Esophagus muscularis mucosa (tissue), 4 donors: ENCODE measurements at regions of chr7 and their contacts with region 1.

Region 1: DNA sequence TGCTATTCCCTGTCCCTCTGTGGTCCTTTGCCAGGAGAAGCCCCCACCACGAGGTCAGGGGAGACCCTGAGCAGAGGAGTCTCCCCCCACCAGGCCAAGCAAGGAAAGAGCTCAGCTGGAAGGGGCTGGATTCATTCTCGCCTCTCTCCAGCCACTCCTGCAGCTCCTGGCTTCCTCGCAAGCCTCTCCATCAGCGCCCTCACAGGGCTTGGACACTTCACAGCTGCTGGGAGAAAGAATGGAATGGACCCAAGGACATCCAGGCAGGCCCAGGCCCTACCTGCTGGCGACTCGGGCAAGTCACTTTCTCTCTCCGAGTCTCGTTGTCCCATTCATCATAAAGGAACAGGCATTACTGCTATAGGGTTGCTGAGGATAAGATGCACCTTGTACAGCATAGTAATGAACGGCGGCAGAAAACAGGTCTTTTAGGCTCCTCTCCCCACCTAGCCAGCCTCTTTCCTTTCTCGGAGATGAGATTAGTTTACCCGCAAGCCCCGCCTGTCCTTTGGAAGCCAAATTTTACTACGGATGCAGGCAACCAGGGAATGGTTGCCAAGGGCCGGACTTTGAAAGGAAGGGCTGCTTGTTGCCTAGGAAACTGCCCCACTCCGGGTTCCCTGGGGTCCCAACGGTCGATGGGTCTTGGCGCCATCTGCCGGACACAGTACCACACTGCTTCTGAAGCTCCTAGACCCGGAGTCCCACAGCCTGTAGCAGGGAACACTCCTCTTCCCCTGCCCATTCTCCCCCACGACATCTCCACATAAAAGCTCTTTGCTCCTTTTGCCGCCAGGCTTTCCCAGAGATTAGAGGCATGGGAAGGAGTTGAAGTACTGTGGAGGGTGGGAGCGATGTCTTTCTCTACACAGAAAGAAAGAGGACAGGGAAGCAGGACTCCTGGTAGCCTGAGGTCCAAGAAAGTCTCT is 22.3 kb downstream of the IMPDH1 start:
- DNase-seq: no peak
- H3K4me3 ChIP-seq: peak overlapping the region in 1 of 4 donors; percentile 24
- H3K27ac ChIP-seq: no peak overlapping the region
- H3K4me1 ChIP-seq: peaks cover 5 to 13% (median 10%) of the 10 kb centered on the region in 4 donors
- H3K27me3 ChIP-seq: peaks cover 0 to 6% (median 0%) of the 10 kb centered on the region in 4 donors
- CTCF ChIP-seq: peak; percentile 79 to 95 (median 86)
- EP300 ChIP-seq: no peak
- POLR2A ChIP-seq: no peak

Region 2: DNA sequence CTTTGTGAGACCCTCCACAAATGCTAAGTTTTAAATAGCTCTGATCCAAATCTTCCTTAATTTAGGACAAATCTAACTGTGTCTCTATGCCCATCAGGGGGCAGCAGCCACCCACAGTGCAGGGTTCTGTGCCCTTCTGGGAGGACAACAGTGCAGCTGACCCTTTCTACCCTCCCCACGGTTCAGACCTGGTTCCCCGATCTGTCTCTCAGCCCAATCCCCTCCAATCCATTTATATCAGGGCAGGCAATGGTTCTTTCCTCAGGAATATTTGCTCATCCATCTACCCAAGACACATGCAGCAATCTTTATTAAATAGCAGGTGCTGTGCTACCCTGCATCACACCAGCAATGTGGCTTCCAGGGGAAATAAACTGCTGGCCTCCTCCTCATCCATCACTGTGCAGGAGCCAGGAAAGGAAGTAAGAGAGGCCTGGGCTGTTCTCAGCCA is 39.8 kb before region 1 on chr7:
- intact Hi-C with region 1: loop called (anchors 2 kb)
- DNase-seq: no peak
- H3K4me3 ChIP-seq: no peak overlapping the region
- H3K27ac ChIP-seq: no peak overlapping the region
- H3K4me1 ChIP-seq: peaks cover 13 to 29% (median 23%) of the 10 kb centered on the region in 4 donors
- H3K27me3 ChIP-seq: peaks cover 0 to 25% (median 6%) of the 10 kb centered on the region in 4 donors
- CTCF ChIP-seq: peak; percentile 56 to 70 (median 66)
- EP300 ChIP-seq: no peak
- POLR2A ChIP-seq: no peak